AG04449 (cell line): ENCODE measurements at regions of chr17 and their contacts with region 1.

Region 1: GRCh38 chr17:40219073-40219860 is at the start of gene WIPF2:
- DNase-seq: peak; percentile 61
- H3K4me3 ChIP-seq: peak within 1 kb of the TSS; percentile 94
- CTCF ChIP-seq: peak; percentile 80

Region 2: DNA sequence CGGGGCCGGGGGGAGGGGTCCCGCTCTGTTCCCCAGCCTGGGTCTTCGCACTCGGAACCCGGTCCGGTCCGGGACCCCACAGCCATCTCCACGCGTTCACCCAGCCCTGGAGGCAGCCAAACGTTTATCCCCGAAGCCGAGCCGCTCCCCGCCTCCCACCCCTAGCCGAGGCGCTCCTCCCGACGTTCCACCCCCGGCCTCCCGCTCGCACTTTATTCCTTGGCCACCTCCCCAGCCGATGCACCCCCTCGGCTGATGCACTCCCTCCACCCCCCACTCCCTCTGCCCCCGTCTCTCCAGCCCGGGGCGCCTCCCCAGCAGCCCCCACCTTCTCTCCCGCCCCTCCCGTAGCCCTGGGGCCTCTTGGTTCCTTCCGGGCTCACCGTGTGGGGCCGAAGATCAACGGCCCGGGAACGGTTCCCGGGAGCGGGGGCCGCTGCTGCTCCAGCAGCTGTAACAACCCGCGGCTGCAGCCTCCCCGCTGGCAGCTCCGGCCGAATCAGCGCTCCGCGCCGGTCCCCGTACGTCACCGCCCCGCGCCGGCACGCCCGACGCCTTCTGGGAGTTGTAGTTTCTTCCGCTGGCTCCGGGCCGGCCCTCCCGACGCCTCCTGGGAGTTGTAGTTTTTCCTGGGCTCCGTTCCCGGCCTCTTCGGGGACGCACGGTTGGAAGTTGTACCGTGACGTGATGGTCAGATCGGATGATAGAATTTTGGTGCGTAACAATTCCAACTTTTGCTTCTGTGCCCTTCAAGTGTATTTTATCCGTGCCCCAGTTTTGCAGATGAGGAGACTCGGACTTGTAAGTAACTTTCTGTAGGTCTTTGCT is 292.0 kb before region 1 on chr17 and contains the starts of genes LRRC3C and ORMDL3:
- CTCF ChIA-PET with region 1: no interaction called
- POLR2A ChIA-PET with region 1: no interaction called
- DNase-seq: peak; percentile 41
- H3K4me3 ChIP-seq: peak within 1 kb of the TSS; percentile 82
- CTCF ChIP-seq: no peak

Region 3: GRCh38 chr17:40191237-40192208 is 27.7 kb before region 1 on chr17:
- CTCF ChIA-PET with region 1: interaction called, 25 read pairs
- POLR2A ChIA-PET with region 1: no interaction called
- DNase-seq: no peak
- H3K4me3 ChIP-seq: peak overlapping the region; percentile 66
- CTCF ChIP-seq: peak; percentile 89

Region 4: DNA sequence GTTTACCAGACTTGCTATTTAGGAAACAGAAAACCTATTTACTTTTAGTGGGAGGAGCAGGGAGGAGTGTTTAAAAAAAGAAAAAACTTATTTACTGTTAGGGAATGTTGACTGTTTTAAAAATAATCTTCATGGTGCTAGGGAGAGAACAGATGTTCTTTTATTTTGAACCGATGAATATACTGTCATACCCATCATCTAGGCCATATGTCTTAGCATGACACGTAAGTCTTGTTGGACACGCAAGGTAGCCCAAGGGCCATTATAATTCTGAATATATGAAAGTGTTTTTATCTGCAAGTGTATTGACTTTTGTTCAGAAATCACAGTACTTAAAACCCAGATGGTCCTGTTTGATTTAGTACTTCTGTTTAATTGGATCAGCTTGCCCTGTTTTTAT is 11.4 kb after region 1 on chr17:
- CTCF ChIA-PET with region 1: interaction called, 11 read pairs
- POLR2A ChIA-PET with region 1: no interaction called
- DNase-seq: no peak
- H3K4me3 ChIP-seq: no peak overlapping the region
- CTCF ChIP-seq: no peak

Region 5: DNA sequence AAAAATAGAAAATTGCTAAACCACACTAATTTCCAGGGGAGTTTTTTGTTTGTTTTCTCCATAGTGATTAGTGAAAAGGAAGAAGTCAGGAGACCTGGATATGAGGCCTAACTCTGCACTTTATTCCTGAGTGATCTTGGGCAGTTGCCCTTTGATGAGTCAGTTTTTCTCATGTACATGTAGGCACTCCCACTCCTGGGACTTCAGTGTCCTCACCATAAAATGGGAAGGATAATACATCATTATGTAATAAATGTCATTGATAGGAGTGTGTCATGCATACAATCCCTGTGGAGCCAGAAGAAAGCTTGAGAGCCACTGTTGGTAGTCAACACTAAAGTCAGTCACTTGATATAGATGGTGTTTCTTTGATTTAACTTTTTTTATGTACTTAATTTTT is 32.3 kb after region 1 on chr17:
- CTCF ChIA-PET with region 1: interaction called, 17 read pairs
- POLR2A ChIA-PET with region 1: no interaction called
- DNase-seq: peak; percentile 16
- H3K4me3 ChIP-seq: no peak overlapping the region
- CTCF ChIP-seq: no peak

Region 6: GRCh38 chr17:40268141-40268712 is 49.0 kb after region 1 on chr17:
- CTCF ChIA-PET with region 1: interaction called, 13 read pairs
- POLR2A ChIA-PET with region 1: interaction called, 3 read pairs
- DNase-seq: no peak
- H3K4me3 ChIP-seq: no peak overlapping the region
- CTCF ChIP-seq: no peak